Psoas muscle (tissue), 8 donors: ENCODE measurements at regions of chr15 and their contacts with region 1.

Region 1: GRCh38 chr15:53841652-53842051 is 82.2 kb upstream of the WDR72 start:
- DNase-seq: no peak
- ATAC-seq: no peak
- H3K4me3 ChIP-seq: no peak overlapping the region
- H3K27ac ChIP-seq: no peak overlapping the region
- H3K4me1 ChIP-seq: no peaks in the 10 kb centered on the region
- H3K27me3 ChIP-seq: no peaks in the 10 kb centered on the region
- CTCF ChIP-seq: no peak

Region 2: GRCh38 chr15:53618461-53618860 is 223.2 kb before region 1 on chr15:
- intact Hi-C with region 1: no loop called
- DNase-seq: no peak
- ATAC-seq: no peak
- H3K4me3 ChIP-seq: no peak overlapping the region
- H3K27ac ChIP-seq: no peak overlapping the region
- H3K4me1 ChIP-seq: no peaks in the 10 kb centered on the region
- H3K27me3 ChIP-seq: no peaks in the 10 kb centered on the region
- CTCF ChIP-seq: no peak

Region 3: DNA sequence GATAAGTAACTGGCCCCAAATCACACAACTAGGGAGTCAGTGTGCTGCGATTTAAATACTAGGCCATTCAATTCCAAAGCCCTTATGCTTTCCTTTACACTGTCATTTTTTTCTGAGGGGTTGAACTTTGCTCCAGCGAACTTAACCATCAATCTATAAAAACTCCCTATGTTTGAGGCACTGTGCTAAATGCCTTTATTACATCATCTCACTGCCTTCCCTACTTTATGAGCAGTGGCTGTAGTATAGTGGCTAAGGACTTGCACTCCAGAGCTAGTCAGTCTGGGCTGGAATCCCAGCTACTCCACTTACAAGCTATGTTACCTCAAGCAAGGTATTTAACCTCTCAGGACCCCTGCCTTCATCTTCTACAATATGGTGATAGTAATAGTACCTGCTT is 55.3 kb before region 1 on chr15:
- intact Hi-C with region 1: loop called in 1 of 2 experiments (anchors 10 kb)
- DNase-seq: no peak
- ATAC-seq: no peak
- H3K4me3 ChIP-seq: no peak overlapping the region
- H3K27ac ChIP-seq: no peak overlapping the region
- H3K4me1 ChIP-seq: no peaks in the 10 kb centered on the region
- H3K27me3 ChIP-seq: no peaks in the 10 kb centered on the region
- CTCF ChIP-seq: no peak